ENCODE measurements at regions of chr6 and their contacts with region 1.

Region 1: GRCh38 chr6:133504761-133505160 is 263.6 kb downstream of the EYA4 start:
- DNase-seq: peak; percentile 24
- ATAC-seq: no peak

Region 2: DNA sequence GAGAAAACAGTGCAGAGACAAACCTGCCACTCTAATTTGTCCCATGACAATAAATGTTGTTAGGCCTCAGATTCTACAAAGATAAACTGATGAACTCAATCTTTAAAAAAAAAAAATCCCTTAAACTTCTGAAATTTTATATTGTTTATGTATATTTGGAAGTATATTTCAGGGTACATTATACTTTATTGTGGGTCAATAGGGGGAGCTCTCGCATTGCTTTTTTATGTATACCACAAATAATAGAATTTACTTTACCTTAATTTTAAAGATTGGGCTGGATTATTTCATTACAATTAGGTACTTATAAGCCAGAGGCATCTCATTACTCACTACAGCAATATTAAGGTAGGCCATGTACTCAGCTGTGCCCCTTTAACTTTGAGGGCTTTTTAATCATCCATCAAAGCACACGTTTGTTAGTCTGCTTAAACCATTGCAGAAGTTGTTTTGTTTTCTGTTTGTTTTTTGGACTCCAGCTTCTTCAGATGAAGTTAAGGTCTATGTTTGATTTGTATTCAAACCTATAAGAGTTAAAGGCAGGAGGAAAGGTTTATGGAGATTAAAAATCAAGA is 319.9 kb before region 1 on chr6:
- intact Hi-C with region 1: loop called in 1 of 2 experiments (anchors 5 kb)
- DNase-seq: no peak
- ATAC-seq: peak in 1 of 2 donors; percentile 12

Measured in left cardiac atrium (tissue), 4 donors.